H1 (cell line): ENCODE measurements at regions of chr17 and their contacts with region 1.

Region 1: DNA sequence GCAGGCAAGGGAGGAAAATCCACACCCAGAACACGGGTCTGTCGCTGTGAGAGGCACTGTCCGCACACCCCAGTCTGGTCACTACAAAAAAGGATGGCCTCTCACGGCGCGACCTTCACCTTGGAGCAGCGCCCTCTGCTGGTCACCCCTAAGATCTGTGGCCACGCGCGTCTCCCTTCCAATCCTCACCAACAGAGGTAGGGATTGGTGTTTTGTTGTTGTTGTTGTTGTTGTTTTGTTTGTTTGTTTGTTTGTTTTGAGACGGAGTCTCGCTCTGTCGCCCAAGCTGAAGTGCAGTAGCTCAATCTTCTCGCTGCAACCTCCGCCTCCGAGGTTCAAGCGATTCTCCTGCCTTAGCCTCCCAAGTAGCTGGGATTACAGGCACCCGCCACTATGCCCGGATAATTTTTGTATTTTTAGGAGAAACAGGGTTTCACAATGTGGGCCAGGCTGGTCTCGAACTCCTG is 15.0 kb upstream of the C17orf58 start:
- DNase-seq: peak in 1 of 2 experiments; percentile 92
- H3K4me3 ChIP-seq: peak overlapping the region in 1 of 4 experiments; percentile 33; a peak in 1 of 8 replicates
- H3K27ac ChIP-seq: no peak overlapping the region
- H3K4me1 ChIP-seq: no peaks in the 10 kb centered on the region
- H3K27me3 ChIP-seq: no peaks in the 10 kb centered on the region
- CTCF ChIP-seq: peak; percentile 67 to 85 (median 83)
- EP300 ChIP-seq: no peak
- POLR2A ChIP-seq: no peak
- RAD21 ChIP-seq: peak; percentile 51 to 56

Region 2: GRCh38 chr17:67993153-67993595 is 18.1 kb before region 1 on chr17:
- CTCF ChIA-PET with region 1: interaction called, 13 read pairs
- POLR2A ChIA-PET with region 1: interaction called, 3 read pairs
- DNase-seq: peak in 1 of 2 experiments; percentile 84
- H3K4me3 ChIP-seq: peak overlapping the region; percentile 84 to 95 (median 86)
- H3K27ac ChIP-seq: peak overlapping the region; percentile 66; the same call in 1 of the 2 replicates
- H3K4me1 ChIP-seq: peaks cover 0 to 13% (median 7%) of the 10 kb centered on the region in 4 experiments; a peak in 4 of 7 replicates
- H3K27me3 ChIP-seq: peaks cover 0 to 21% (median 10%) of the 10 kb centered on the region in 4 experiments; a peak in 6 of 7 replicates
- CTCF ChIP-seq: no peak
- EP300 ChIP-seq: no peak
- POLR2A ChIP-seq: peak in 1 of 2 experiments; percentile 26; a peak in 2 of 3 replicates
- RAD21 ChIP-seq: no peak

Region 3: DNA sequence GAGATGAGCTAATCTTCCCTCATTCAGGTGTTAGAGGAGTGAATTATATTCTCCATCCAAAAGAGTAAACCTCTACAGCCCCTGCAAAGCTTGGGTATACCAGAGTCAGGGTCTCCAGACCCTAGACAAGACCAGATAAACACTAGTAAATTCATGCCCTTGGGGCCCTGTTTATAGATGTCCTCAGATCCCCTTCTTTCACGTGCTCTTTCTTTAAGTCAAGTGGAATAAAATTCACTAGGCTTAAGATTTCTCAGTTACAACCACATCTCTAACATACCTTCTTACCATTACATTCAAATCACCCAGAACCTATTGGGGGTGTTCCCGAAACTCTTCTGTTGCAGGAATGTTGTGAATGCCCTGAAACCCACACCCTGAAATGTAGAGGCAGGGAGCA is 12.8 kb before region 1 on chr17:
- CTCF ChIA-PET with region 1: interaction called, 13 read pairs
- POLR2A ChIA-PET with region 1: interaction called, 5 read pairs
- DNase-seq: no peak
- H3K4me3 ChIP-seq: no peak overlapping the region
- H3K27ac ChIP-seq: no peak overlapping the region
- H3K4me1 ChIP-seq: peaks cover 0 to 13% (median 6%) of the 10 kb centered on the region in 4 experiments; a peak in 3 of 7 replicates
- H3K27me3 ChIP-seq: peaks cover 0 to 21% (median 10%) of the 10 kb centered on the region in 4 experiments; a peak in 6 of 7 replicates
- CTCF ChIP-seq: no peak
- EP300 ChIP-seq: no peak
- POLR2A ChIP-seq: no peak
- RAD21 ChIP-seq: no peak

Region 4: GRCh38 chr17:68172461-68172954 is 161.3 kb after region 1 on chr17:
- CTCF ChIA-PET with region 1: no interaction called
- POLR2A ChIA-PET with region 1: no interaction called
- DNase-seq: peak in 1 of 2 experiments; percentile 87
- H3K4me3 ChIP-seq: no peak overlapping the region
- H3K27ac ChIP-seq: no peak overlapping the region
- H3K4me1 ChIP-seq: no peaks in the 10 kb centered on the region
- H3K27me3 ChIP-seq: no peaks in the 10 kb centered on the region
- CTCF ChIP-seq: peak; percentile 80 to 90 (median 86)
- EP300 ChIP-seq: no peak
- POLR2A ChIP-seq: no peak
- RAD21 ChIP-seq: peak; percentile 91 to 93